Aorta (tissue), 5 donors: ENCODE measurements at regions of chr15 and their contacts with region 1.

Region 1: GRCh38 chr15:90799639-90800170 is 68.7 kb upstream of the FURIN start:
- DNase-seq: no peak
- ATAC-seq: no peak
- H3K4me3 ChIP-seq: no peak overlapping the region
- H3K27ac ChIP-seq: no peak overlapping the region
- H3K4me1 ChIP-seq: no peaks in the 10 kb centered on the region
- H3K27me3 ChIP-seq: no peaks in the 10 kb centered on the region

Region 2: DNA sequence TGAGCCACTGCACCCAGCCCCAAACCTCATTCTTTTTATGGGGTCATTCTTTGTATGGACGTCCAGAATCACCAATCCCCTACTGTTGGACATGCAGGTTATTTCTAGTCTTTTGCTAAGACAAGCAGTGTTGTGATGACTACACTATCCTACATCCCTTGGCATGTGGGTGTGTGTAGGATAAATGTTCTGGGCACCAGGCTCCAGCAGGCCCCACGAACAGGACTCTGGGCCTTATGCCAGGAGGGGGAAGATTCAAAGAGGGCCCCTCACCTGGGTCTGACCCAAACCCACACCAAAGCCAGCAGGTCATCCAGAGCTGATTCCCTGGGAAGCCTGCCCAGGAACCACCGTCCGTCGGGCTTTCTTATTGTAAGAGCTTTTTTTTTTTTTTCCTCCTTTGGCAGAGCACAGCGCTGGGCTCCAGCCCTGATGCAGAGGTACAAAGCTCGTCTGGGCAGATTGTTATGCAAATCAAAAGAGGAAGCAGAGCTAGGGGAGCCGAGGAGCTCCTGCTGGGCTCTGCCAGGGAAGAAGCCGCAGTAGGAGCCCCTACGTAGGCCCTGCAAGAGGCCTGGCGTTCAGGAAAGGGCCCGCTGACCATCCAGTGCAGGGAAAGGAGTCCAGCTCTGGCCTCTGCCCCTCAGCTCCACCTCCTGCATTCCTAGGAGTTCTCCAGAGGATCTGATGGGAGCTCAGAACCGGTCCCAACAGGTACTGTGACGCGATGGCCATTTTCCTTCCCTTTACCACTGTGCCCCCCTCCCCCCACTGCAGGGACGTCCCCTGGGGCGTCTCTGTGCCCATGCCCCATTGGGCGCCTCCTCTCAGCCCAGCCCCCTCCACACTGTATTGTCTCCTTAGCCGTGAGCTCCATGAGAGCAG is 39.7 kb after region 1 on chr15:
- intact Hi-C with region 1: loop called in 1 of 2 experiments (anchors 5 kb)
- DNase-seq: peak in 1 of 2 donors; percentile 64
- ATAC-seq: peak; percentile 31
- H3K4me3 ChIP-seq: no peak overlapping the region
- H3K27ac ChIP-seq: no peak overlapping the region
- H3K4me1 ChIP-seq: no peaks in the 10 kb centered on the region
- H3K27me3 ChIP-seq: no peaks in the 10 kb centered on the region